Endothelial cell of umbilical vein (primary cell): ENCODE measurements at regions of chr16 and their contacts with region 1.

Region 1: DNA sequence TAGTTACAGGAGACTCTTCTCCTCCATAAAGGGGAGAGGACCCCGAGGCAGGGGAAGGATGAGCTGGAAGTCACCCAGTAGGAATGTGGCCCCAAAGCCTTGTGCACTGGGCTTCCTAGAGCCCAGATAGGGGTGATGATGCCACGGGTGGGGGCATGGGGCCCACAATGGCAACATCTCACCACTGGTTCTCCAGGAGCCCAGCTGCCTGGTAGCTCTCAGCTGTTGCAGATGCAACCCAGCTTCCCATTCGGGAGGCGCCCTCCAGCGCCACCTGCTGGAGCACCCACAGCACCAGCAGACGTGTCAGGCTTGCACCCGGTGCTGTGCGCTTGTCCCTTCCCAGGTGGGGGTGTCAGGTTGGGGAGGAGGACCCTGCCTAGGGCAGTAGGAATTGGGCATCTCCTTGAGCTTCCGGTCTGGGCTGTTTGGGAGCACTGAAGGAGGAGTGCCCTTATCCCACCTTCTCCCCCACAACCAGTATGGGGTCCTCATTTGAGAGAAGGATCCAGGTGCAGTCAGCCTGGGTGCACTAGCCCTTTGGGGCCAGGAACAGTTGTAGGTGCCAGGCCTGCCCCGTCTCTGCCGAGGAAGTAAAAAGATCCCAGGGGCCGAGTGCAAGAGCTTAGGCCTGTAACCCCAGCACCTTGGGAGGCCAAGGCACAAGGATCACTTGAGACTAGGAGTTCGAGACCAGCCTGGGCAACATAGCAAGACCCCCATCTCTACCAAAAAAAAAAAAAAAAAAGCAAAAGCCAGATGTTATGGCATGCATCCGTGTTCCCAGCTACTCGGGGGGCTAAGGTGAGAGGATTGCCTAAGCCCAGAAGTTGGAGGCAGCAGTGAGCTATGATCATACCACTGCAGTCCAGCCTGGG is 14.4 kb downstream of the CDIPT start:
- DNase-seq: peak; percentile 63
- H3K4me3 ChIP-seq: no peak overlapping the region
- H3K27ac ChIP-seq: no peak overlapping the region
- H3K4me1 ChIP-seq: peaks cover 5% of the 10 kb centered on the region
- H3K27me3 ChIP-seq: no peaks in the 10 kb centered on the region
- CTCF ChIP-seq: peak; percentile 83 to 97
- POLR2A ChIP-seq: no peak

Region 2: GRCh38 chr16:29790183-29790952 is 58.3 kb before region 1 on chr16 and contains the start of gene KIF22:
- CTCF ChIA-PET with region 1: interaction called, 34 read pairs
- POLR2A ChIA-PET with region 1: no interaction called
- dilution Hi-C with region 1: no loop called
- intact Hi-C with region 1: no loop called
- DNase-seq: peak; percentile 99
- H3K4me3 ChIP-seq: peak within 1 kb of the TSS; percentile 80 to 93 (median 88)
- H3K27ac ChIP-seq: peak within 1 kb of the TSS; percentile 13
- H3K4me1 ChIP-seq: peaks cover 23% of the 10 kb centered on the region
- H3K27me3 ChIP-seq: no peaks in the 10 kb centered on the region
- CTCF ChIP-seq: peak; percentile 85 to 90
- POLR2A ChIP-seq: peak; percentile 70
- total RNA-seq, gene KIF22: 82.3 and 90.0 TPM in 2 replicates

Region 3: GRCh38 chr16:29825145-29826044 is 23.3 kb before region 1 on chr16:
- CTCF ChIA-PET with region 1: interaction called, 140 read pairs
- POLR2A ChIA-PET with region 1: interaction called, 16 read pairs
- dilution Hi-C with region 1: no loop called
- intact Hi-C with region 1: loop called (anchors 2 kb)
- DNase-seq: peak; percentile 65
- H3K4me3 ChIP-seq: no peak overlapping the region
- H3K27ac ChIP-seq: peak overlapping the region; percentile 73
- H3K4me1 ChIP-seq: peaks cover 47% of the 10 kb centered on the region
- H3K27me3 ChIP-seq: no peaks in the 10 kb centered on the region
- CTCF ChIP-seq: no peak
- POLR2A ChIP-seq: no peak

Region 4: GRCh38 chr16:29873319-29873718 is 24.7 kb after region 1 on chr16:
- CTCF ChIA-PET with region 1: interaction called, 11 read pairs
- POLR2A ChIA-PET with region 1: no interaction called
- dilution Hi-C with region 1: no loop called
- intact Hi-C with region 1: no loop called
- DNase-seq: no peak
- H3K4me3 ChIP-seq: no peak overlapping the region
- H3K27ac ChIP-seq: no peak overlapping the region
- H3K4me1 ChIP-seq: no peaks in the 10 kb centered on the region
- H3K27me3 ChIP-seq: peaks cover 14 to 16% of the 10 kb centered on the region in 2 experiments
- CTCF ChIP-seq: no peak
- POLR2A ChIP-seq: no peak

Region 5: DNA sequence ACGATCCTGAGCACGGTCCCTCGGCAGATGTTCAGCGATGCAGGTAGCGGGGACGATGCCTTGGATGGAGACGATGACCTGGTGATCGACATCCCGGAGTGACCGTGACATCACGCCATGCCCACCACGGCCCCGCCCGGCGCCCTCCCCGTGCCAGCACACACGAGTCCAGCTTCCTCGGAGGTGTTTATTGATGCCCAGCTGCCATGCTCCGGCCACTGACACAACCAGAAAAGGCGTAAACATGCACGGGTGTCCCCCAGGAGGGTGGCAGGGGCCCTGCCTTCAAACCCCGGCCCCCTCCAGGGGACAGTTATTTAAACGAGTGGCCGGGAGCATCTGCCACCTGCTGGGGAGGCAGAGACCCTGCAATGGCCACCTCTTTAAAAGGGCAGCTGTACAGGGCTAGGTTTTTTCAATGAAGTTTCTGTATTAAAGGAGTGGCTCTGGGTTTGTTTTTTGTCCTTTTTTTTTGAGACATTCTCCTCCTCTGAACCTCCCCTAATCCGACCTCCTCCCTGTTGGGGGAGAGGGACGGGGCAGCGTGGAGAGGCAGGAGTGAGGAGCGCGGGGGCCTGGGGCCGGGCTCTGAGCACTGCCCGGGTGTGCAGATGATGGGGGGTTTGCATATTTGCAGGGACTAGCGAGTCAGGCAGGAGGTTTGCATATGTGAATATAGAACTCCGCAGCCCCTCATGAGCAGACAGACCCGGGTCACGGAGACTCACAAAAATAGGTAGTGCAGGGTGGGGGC is 156.9 kb after region 1 on chr16:
- CTCF ChIA-PET with region 1: interaction called, 10 read pairs
- POLR2A ChIA-PET with region 1: no interaction called
- dilution Hi-C with region 1: no loop called
- intact Hi-C with region 1: no loop called
- DNase-seq: peak; percentile 11
- H3K4me3 ChIP-seq: no peak overlapping the region
- H3K27ac ChIP-seq: no peak overlapping the region
- H3K4me1 ChIP-seq: no peaks in the 10 kb centered on the region
- H3K27me3 ChIP-seq: peaks cover 9 to 12% of the 10 kb centered on the region in 2 experiments
- CTCF ChIP-seq: peak; percentile 73 to 88
- POLR2A ChIP-seq: no peak